Activated T-helper 1 cell treated with anti-CD3 and anti-CD28 coated beads, Interleukin-12 subunit alpha, Interleukin-12 subunit beta, Interleukin-2, Interleukin-4 antibody, amounts not matched to agents 30 ng/mL and 10 ng/mL and 1 ng/mL, durations not matched to agents 14 hours and 24 hours and 36 hours (primary cell): ENCODE measurements at regions of chr19 and their contacts with region 1.

Region 1: DNA sequence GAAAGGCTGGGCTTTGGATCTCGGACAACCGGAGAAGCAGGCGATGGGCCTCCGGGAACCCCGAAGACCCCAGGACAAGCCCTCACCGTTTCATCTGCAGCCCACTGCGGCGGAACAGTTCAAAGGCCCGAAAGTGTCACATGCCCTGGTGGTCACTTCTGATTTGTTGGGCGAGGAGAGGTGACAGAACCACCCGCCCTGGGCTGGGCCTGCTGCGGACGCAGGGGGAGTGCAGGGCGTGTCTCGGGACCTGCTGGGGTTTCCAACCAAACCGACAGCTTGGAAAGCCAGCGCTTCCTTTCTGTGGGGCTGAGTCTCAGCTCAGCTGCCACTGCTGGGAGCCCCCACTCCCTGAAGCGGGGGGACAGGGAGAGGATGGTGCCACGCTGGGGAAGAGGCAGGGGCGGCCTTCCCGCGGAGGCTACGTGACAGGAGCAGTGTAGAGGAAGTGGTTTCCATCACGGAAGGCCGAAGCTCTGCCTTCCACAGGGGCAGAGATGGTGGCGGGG is 22.8 kb upstream of the ZBTB7A start:
- DNase-seq: peak; percentile 69
- H3K4me3 Mint-ChIP-seq: peak overlapping the region; percentile 78
- H3K27ac Mint-ChIP-seq: peak overlapping the region; percentile 94
- H3K4me1 Mint-ChIP-seq: peaks cover 18% of the 10 kb centered on the region
- H3K27me3 Mint-ChIP-seq: no peaks in the 10 kb centered on the region

Region 2: DNA sequence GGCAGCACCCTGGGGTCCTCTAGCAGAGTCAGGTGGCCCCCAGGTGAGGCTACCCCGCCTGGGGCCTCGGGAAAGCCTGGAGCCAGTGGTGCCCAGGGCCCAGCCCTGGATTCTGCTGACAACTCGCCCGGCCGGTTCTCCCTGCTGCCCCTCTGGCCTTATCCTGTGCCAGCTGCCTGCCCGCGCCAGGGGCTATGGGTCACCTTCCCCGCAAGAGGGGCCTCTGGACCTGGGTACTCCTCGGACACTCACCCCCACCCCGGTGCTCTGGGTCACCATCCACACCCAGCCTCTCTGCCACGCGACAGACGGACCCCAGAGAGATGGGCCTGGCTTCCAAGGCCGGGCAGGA is 46.7 kb before region 1 on chr19:
- intact Hi-C with region 1: no loop called
- DNase-seq: no peak
- H3K4me3 Mint-ChIP-seq: no peak overlapping the region
- H3K27ac Mint-ChIP-seq: no peak overlapping the region
- H3K4me1 Mint-ChIP-seq: no peaks in the 10 kb centered on the region
- H3K27me3 Mint-ChIP-seq: no peaks in the 10 kb centered on the region

Region 3: GRCh38 chr19:4077882-4078614 is 11.4 kb before region 1 on chr19:
- intact Hi-C with region 1: loop called (anchors 1 kb)
- DNase-seq: peak; percentile 41
- H3K4me3 Mint-ChIP-seq: peak overlapping the region; percentile 61
- H3K27ac Mint-ChIP-seq: peak overlapping the region; percentile 83
- H3K4me1 Mint-ChIP-seq: peaks cover 32% of the 10 kb centered on the region
- H3K27me3 Mint-ChIP-seq: no peaks in the 10 kb centered on the region

Region 4: DNA sequence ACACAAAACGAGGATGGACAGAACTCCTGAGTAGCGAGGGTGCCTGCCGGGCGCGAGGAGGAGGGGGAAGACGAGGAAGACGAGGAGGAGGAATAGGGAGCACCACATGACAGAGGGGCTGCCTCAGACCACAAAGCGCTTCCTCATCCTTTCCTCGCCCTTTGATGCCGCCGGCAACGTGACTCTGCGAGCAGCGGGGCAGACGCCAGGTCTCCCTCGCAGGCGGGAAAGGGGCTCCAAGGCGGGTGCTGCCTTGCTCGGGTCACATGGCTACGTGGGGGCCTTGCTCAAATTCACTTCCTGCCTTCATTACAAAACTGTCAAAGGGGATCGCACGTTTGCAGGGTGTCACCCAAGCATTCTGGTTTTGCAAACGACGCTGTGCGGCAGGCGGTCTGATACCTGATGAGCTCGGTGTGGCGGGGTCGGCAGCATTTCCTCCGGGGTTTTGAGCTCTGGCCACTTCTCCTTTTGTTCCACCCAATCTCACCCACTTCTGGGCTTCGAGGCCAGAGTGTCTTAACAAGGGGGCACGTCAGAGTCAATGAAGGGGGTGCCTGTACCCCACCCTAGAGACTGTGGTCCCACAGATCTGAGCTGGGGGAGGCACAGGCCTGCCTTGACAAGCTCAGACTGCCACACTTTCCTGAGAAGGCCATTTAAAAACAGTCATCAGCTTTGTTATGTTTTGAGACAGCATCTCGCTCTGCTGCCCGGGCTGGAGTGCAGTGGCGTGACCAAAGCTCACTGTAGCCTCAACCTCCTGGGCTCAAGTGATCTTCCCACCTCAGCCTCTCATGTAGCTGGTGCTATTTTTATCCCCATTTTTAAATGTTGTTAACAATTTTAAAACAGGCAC is 19.5 kb after region 1 on chr19:
- intact Hi-C with region 1: loop called (anchors 1 kb)
- DNase-seq: peak; percentile 22
- H3K4me3 Mint-ChIP-seq: peak overlapping the region; percentile 24
- H3K27ac Mint-ChIP-seq: peak overlapping the region; percentile 81
- H3K4me1 Mint-ChIP-seq: peaks cover 41% of the 10 kb centered on the region
- H3K27me3 Mint-ChIP-seq: no peaks in the 10 kb centered on the region